ENCODE measurements at regions of chr19 and their contacts with region 1.

Region 1: DNA sequence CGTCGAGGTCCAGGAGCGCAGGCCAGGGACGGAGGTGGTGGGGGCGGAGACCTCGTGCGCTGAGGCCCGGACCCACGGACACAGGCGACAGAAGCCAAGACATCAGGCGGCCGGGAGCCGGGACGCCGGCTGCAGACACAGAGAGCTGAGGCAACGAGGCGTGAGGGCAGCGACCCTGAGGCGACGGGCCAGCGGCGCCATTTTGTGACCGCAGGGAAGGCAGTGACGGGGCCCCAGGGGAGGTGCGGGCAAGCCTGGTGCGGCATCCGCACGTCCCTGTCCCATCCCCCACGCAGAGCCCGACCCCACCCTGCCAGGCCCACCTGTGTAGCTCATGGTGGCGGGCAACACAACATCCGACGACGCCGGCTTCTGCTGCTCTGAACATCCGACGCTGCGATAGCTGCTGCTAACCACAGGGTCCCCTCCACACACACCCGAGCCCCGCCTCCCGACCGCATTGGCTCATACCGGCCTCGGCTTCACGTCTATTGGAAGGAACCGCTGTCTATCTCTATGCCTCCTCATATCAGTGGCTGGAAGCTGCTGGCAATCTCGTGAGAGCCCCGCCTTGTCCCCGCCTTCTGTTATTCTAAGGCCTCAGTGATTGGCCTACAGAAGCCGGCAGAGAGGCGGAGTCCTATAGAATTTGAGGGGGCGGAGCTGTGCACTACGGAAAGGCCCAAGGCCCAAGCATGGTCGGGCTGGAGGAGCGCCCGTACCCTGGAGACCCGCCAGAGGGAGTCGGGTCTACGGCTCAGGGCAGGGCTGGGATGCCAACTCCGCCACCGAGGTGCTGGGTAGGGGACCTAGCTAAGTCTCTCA is at the start of gene AKAP8L:
- DNase-seq: peak; percentile 100
- ATAC-seq: peak; percentile 98
- H3K4me3 Mint-ChIP-seq: peak within 1 kb of the TSS; percentile 92
- H3K27ac Mint-ChIP-seq: peak within 1 kb of the TSS; percentile 94
- H3K4me1 Mint-ChIP-seq: peaks cover 36% of the 10 kb centered on the region
- H3K27me3 Mint-ChIP-seq: no peaks in the 10 kb centered on the region
- total RNA-seq, gene AKAP8L: 105 to 116 TPM

Region 2: GRCh38 chr19:15177269-15178116 is 241.3 kb before region 1 on chr19:
- CTCF ChIA-PET with region 1: interaction called, 16 read pairs
- DNase-seq: peak; percentile 85
- ATAC-seq: peak; percentile 95
- H3K4me3 Mint-ChIP-seq: no peak overlapping the region
- H3K27ac Mint-ChIP-seq: no peak overlapping the region
- H3K4me1 Mint-ChIP-seq: peaks cover 4% of the 10 kb centered on the region
- H3K27me3 Mint-ChIP-seq: peaks cover 4% of the 10 kb centered on the region

Region 3: GRCh38 chr19:15379083-15379995 is 39.5 kb before region 1 on chr19 and contains the start of gene AKAP8:
- CTCF ChIA-PET with region 1: interaction called, 29 read pairs
- DNase-seq: peak; percentile 98
- ATAC-seq: peak; percentile 88
- H3K4me3 Mint-ChIP-seq: peak within 1 kb of the TSS; percentile 84
- H3K27ac Mint-ChIP-seq: peak within 1 kb of the TSS; percentile 100
- H3K4me1 Mint-ChIP-seq: peaks cover 41% of the 10 kb centered on the region
- H3K27me3 Mint-ChIP-seq: no peaks in the 10 kb centered on the region
- total RNA-seq, gene AKAP8: 55.6 to 59.0 TPM

Region 4: DNA sequence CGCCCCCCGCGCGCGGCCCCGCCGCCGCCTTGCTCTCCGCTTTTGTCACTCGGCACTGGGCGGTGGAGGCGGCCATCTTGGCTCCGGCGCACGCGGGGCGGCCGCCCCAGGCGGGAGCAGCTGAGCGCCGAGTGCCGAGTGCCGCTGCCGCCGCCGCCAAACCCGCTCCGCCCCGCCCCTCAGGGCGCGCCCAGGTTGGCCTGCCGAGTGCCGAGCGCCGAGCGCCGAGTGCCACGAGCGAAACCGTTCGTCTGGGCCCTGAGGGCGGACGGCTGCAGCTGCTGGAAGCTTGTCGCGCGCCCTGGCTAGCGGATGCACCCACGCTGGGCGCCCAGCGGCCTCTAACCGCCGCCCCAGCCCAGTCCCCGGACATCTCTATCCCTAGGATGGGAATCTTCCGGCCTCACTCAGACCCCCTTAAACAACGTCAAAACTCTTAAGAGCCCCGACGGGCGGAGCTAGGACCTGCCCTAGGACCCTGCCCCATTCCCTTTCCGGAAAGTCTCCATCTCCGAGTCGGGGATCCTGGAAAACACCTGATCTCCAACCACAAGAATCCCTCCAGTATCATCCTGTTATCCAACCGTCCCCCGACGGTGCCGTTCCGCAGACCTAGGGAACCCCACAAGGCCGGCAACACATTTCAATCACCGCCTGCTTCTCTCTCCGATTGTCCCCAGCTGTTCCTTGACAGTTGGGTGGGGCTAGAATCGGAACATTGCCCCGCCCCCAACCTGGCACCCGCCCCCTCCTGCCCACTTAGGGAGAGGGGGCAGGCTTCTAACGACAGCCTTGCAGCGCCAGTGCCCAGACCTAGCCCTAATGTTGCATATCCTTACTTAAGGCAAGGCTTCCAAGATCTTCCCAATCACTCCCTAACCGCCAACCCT is 14.1 kb after region 1 on chr19:
- CTCF ChIA-PET with region 1: interaction called, 41 read pairs
- DNase-seq: peak; percentile 95
- ATAC-seq: peak; percentile 92
- H3K4me3 Mint-ChIP-seq: peak overlapping the region; percentile 93
- H3K27ac Mint-ChIP-seq: peak overlapping the region; percentile 95
- H3K4me1 Mint-ChIP-seq: peaks cover 36% of the 10 kb centered on the region
- H3K27me3 Mint-ChIP-seq: no peaks in the 10 kb centered on the region

Region 5: DNA sequence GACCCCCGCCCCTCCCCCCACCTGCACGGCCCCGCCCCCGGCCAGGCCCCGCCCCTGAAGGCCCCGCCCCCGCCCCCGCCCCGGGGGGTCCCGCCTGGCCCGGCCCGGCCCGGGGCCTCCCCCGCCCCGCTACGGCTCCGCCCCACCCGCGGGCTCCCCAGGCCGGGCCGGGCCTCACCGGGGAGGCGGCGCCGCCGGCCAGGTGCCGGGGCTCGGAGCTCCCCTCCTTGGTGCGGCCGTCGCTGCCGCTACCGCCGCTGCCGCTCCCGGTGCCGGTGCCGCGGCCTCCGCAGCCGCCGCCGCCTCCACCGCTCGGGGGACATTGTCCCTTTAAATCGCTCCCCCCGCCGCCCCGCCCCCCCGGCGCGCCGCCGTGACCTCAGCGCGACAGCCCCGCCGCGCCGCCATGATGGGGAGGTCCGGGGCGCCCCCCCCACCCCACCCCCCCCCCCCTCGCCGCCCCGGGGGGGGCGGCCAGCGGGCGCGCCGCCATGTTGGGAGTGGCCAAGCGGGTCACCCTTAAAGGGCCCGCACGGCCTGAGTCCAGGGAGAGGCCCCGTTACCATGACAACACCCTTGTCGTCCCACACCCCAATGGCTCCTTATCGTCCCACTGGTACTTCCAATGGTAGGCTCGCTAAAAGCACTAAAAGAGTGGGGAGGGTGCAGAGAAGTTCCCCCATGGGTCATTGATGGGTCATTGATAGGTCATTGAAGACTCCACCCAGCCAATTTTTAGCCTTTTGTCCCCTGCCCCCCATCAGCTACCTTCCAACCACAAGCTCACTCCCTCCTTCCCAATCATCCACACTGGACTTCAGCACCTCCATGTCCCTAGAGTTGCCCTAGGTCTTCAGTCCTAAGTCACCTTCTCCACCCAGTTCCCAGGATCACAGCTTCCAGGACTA is 31.1 kb after region 1 on chr19 and contains the start of gene WIZ:
- CTCF ChIA-PET with region 1: interaction called, 14 read pairs
- DNase-seq: peak; percentile 87
- ATAC-seq: peak; percentile 77
- H3K4me3 Mint-ChIP-seq: peak within 1 kb of the TSS; percentile 49
- H3K27ac Mint-ChIP-seq: peak within 1 kb of the TSS; percentile 69
- H3K4me1 Mint-ChIP-seq: peaks cover 16% of the 10 kb centered on the region
- H3K27me3 Mint-ChIP-seq: no peaks in the 10 kb centered on the region
- total RNA-seq, gene WIZ: 29.9 to 30.8 TPM

Region 6: GRCh38 chr19:15466851-15467733 is 48.3 kb after region 1 on chr19:
- CTCF ChIA-PET with region 1: interaction called, 33 read pairs
- DNase-seq: peak; percentile 91
- ATAC-seq: peak; percentile 63
- H3K4me3 Mint-ChIP-seq: peak overlapping the region; percentile 39
- H3K27ac Mint-ChIP-seq: peak overlapping the region; percentile 87
- H3K4me1 Mint-ChIP-seq: peaks cover 62% of the 10 kb centered on the region
- H3K27me3 Mint-ChIP-seq: peaks cover 6% of the 10 kb centered on the region

Region 7: GRCh38 chr19:15562145-15562544 is 143.3 kb after region 1 on chr19:
- CTCF ChIA-PET with region 1: interaction called, 23 read pairs
- DNase-seq: no peak
- ATAC-seq: no peak
- H3K4me3 Mint-ChIP-seq: no peak overlapping the region
- H3K27ac Mint-ChIP-seq: no peak overlapping the region
- H3K4me1 Mint-ChIP-seq: no peaks in the 10 kb centered on the region
- H3K27me3 Mint-ChIP-seq: peaks cover 21% of the 10 kb centered on the region

Measured in activated CD8-positive, alpha-beta memory T cell treated with anti-CD3 and anti-CD28 coated beads, Interleukin-2, amount 10 ng/mL, durations not matched to agents 7 days and 5 days (primary cell).